Cardiac septum (tissue), 1 donor: ENCODE measurements at regions of chr12 and their contacts with region 1.

Region 1: DNA sequence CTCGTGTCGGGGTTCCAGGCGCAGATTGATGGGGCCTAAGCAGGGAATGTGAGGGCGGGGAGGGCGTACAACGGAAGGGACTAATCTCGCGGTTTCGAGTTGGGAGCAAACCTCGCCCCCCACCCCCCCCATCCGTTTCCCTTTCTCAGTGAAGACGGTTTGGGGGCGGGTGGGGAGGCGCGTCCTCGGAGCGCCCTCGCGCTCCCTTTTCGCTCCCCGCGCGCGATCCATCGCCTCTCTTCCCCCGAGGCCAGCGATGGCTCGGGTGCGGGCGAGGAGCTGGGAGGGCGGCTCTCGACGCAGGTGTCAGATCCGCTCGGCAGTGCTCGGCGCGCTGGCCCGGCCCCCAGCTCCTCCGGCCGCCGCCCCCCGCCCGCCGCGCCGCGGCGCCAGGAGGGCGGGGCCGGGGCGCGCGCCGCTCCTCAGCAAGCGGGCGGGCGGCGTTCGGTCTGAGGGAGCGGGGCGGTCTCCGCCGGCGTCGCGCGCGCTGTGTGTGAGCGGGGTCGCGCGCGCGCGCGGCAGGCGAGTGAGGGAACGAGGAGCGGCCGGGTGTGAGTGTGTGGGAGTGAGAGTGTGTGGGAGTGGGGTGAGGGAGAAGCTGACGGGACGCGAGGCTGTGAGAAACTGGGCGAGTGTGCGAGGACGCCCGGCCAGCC is at the start of gene RIMKLB:
- DNase-seq: peak; percentile 89
- total RNA-seq, gene RIMKLB: 13.8 TPM

Region 2: DNA sequence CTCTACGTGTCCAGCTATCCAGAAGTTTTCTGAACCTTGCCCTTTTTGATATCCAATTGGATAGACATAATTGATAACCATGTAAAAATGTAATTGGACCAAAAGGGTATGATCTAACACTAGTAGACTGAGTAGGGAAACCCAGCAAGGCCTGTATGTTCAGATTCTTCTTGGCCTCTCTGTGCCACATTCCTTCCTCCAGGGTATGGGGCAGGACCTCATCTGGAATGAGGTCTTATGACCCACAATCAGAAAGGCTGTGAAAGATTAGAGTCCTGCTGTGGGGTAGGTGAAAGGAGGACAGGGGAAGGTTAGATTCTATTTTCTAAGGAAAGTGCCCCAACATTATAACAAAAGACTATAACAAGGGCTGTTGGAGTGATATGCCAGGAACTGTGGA is 73.5 kb after region 1 on chr12:
- intact Hi-C with region 1: loop called (anchors 5 kb)
- DNase-seq: no peak

Region 3: DNA sequence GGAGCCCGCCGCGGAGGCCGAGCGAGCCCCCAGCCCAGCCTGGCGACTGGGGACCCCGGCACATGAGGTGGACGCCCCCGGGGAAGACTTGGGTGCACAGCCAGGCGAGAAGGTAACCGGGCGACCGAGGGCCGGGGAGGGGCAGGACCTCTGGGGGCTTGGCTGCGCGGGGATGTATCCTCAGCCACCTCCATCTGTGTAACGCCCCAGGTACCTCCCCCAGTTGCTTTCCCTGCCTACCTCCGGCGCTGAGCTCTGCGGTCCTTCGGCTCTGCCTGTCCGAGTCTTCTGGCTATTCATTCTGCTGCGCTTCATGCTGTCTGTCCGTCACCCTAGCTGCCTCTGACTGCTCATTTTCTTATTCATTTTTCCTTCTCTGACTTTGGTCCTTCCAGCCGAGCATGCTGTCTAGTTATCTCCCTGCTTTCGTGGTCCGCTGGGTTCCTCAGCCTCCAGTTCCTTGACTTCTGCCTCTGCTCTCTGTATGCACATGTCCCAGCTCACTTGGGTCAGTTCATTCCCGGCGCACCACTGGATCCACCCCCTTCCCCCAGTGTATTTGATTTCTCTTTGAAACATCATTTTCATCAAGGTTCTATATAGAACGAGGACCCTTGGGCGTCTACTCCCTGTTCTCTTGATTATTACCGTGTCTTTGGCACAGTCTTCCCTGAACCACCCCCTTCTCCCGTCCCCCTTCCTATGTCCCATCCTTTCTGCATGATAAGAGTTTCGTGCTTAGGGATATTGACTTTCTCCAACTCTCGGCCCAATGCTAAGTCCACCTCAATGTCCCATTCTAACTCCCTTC is 217.3 kb after region 1 on chr12:
- intact Hi-C with region 1: loop called (anchors 5 kb)
- DNase-seq: no peak